ENCODE measurements at regions of chr14 and their contacts with region 1.

Region 1: DNA sequence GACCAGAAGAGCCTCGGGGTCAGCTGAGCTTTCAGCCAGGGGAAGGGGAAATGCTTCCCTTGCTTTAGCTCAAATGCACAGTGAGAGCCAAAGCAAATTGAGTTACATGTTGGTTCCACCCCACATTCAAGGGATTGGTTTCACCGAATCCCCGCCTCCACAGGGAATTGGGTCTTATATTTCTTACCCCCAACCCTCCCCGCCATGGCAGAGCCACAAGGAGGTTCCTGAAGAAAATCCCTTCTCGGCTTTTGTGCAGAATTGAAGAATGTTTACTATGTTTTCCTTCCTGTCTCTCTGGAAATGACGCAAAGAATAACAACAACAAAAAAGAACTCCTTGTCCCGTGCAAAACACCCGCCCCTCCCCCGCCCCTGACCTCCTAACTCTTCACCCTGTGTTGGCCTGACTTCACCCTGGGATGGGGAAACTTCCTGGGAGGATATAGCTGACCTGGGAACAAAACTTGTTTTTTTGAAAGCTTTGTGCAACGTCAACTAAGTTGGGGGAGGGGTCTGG is 21.9 kb upstream of the CIPC start:
- DNase-seq: no peak
- H3K4me3 ChIP-seq: peak overlapping the region in 2 of 4 experiments; percentile 7 to 36; a peak in 3 of 8 replicates
- H3K27ac ChIP-seq: peak overlapping the region; percentile 46; the same call in 1 of the 2 replicates
- H3K4me1 ChIP-seq: peaks cover 4 to 12% (median 11%) of the 10 kb centered on the region in 4 experiments; a peak in 5 of 7 replicates
- H3K27me3 ChIP-seq: no peaks in the 10 kb centered on the region; a peak in 1 of 7 replicates
- CTCF ChIP-seq: no peak
- EP300 ChIP-seq: peak in 1 of 2 experiments; percentile 24; a peak in 1 of 3 replicates
- POLR2A ChIP-seq: no peak
- RAD21 ChIP-seq: no peak

Region 2: GRCh38 chr14:76863724-76864407 is 212.3 kb before region 1 on chr14:
- CTCF ChIA-PET with region 1: interaction called, 719 read pairs
- POLR2A ChIA-PET with region 1: no interaction called
- DNase-seq: no peak
- H3K4me3 ChIP-seq: no peak overlapping the region
- H3K27ac ChIP-seq: no peak overlapping the region
- H3K4me1 ChIP-seq: peaks cover 0 to 12% (median 8%) of the 10 kb centered on the region in 4 experiments; a peak in 6 of 7 replicates
- H3K27me3 ChIP-seq: no peaks in the 10 kb centered on the region; a peak in 1 of 7 replicates
- CTCF ChIP-seq: no peak
- EP300 ChIP-seq: no peak
- POLR2A ChIP-seq: no peak
- RAD21 ChIP-seq: no peak

Region 3: DNA sequence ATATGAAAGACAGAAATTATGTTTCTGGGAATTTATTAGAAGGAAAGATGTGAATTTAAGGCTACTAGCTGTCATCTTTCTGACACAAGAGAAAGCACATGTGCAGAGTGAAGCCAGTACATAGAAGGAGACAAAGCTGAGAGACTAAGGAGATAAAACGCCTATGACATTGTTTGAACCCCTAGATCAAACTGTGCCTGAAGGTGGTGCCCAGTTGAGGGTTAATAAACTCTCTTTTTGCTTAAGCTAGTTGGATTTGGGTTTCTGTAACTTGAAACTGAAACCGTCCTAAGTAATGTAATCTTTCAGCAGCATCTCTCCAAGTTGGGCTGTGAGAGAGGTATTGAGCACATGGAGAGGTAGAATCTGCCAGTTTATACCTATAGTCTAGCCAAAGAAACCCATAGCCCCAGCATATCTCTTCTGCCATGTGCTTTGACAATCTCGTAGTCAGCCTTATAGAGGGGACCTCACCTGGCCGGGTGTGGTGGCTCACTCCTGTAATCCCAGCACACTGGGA is 165.7 kb before region 1 on chr14:
- CTCF ChIA-PET with region 1: interaction called, 199 read pairs
- POLR2A ChIA-PET with region 1: interaction called, 4 read pairs
- DNase-seq: no peak
- H3K4me3 ChIP-seq: no peak overlapping the region
- H3K27ac ChIP-seq: no peak overlapping the region
- H3K4me1 ChIP-seq: peaks cover 0 to 3% (median 1%) of the 10 kb centered on the region in 4 experiments; a peak in 2 of 7 replicates
- H3K27me3 ChIP-seq: no peaks in the 10 kb centered on the region
- CTCF ChIP-seq: no peak
- EP300 ChIP-seq: no peak
- POLR2A ChIP-seq: no peak
- RAD21 ChIP-seq: no peak

Region 4: DNA sequence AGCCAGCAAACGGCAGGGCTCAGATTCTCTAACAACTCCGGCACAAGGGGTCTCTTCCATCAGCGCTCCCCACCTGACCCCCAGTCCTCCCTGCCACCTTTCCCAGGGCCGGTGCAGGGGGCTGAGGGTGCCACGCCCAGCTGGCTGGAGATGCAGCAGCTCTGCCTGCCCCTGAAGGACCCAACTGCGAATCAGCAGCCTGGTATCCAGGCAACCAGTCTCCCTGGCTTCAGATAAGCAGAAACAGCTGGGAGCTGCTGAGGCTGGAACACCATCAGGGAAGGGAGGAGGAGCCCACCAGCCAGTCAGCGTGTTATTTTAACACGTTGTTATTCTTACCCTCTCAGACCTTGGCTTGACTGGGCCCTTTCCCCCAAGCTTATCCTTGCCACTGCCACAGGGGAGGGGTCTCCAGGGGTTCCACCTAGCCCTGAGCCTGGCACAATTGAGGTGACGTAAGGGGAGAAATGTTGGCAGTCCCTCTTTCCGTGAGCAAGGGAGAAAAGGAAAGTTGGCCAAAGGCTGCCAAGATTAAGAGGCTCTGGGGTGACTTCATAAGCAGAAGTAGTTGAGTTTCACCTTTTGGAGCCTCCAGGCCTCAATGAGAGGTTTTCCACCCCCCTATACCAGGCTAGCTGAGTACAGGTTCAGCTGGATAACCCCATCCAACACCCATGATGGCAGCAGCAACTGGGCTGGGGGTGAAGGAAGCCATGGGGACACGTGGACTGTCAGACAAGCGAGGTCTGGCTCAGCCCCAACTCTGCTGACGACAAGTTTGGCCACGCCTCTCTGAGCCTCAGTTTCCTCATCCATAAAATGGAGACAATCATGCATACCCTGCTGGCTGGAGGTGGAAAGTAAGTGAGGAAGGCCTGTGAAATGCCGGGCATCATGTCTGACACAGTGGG is 138.7 kb before region 1 on chr14:
- CTCF ChIA-PET with region 1: interaction called, 17 read pairs
- POLR2A ChIA-PET with region 1: no interaction called
- DNase-seq: no peak
- H3K4me3 ChIP-seq: no peak overlapping the region
- H3K27ac ChIP-seq: peak overlapping the region; percentile 10; the same call in 1 of the 2 replicates
- H3K4me1 ChIP-seq: peaks cover 0 to 29% (median 16%) of the 10 kb centered on the region in 4 experiments; a peak in 6 of 7 replicates
- H3K27me3 ChIP-seq: no peaks in the 10 kb centered on the region
- CTCF ChIP-seq: no peak
- EP300 ChIP-seq: no peak
- POLR2A ChIP-seq: no peak
- RAD21 ChIP-seq: no peak

Region 5: GRCh38 chr14:77086017-77086736 is 10.0 kb after region 1 on chr14:
- CTCF ChIA-PET with region 1: interaction called, 603 read pairs
- POLR2A ChIA-PET with region 1: interaction called, 45 read pairs
- DNase-seq: no peak
- H3K4me3 ChIP-seq: no peak overlapping the region
- H3K27ac ChIP-seq: peak overlapping the region; percentile 54
- H3K4me1 ChIP-seq: peaks cover 10 to 30% (median 19%) of the 10 kb centered on the region in 4 experiments
- H3K27me3 ChIP-seq: no peaks in the 10 kb centered on the region
- CTCF ChIP-seq: no peak
- EP300 ChIP-seq: peak in 1 of 2 experiments; percentile 90; a peak in 2 of 3 replicates
- POLR2A ChIP-seq: no peak; a peak in 1 of 3 replicates
- RAD21 ChIP-seq: no peak

Region 6: DNA sequence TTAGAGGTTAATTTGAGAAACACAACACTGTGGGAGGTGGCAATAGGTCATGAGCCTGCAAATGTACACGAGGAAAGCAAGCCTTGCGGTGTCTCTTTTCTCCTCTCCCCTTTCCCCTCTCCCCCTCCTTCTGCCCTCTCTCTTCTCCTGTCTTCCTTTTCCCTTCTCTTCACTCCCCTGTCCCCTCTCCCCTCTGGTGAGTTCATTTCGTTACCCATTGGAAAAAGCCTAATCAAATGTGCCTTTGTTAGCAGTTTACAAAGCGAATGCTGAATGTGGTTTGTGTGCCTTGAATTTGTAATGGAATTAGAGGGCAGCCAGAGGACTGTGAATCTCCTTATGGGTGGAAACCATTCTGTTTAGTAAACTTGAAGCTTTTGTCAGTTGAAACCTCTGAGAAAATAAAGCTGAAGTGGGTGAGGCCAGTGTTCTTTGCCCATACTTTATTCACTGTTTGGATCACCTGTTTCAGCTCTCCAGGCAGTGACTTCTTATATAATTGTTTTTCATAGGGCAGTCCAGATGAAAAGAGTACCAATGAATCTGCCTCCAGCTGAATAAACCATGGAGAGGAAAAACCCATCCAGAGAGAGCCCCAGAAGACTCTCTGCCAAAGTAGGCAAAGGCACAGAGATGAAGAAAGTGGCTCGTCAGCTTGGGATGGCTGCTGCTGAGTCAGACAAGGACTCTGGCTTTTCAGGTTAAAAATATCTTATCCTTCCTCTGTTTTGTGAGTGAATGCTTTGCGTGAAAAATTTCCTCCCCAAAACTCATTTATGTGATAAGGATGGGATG is 29.2 kb after region 1 on chr14:
- CTCF ChIA-PET with region 1: interaction called, 1,490 read pairs
- POLR2A ChIA-PET with region 1: interaction called, 4 read pairs
- DNase-seq: no peak
- H3K4me3 ChIP-seq: peak overlapping the region in 1 of 4 experiments; percentile 44; a peak in 2 of 8 replicates
- H3K27ac ChIP-seq: peak overlapping the region; percentile 58; the same call in 1 of the 2 replicates
- H3K4me1 ChIP-seq: peaks cover 2 to 25% (median 15%) of the 10 kb centered on the region in 4 experiments
- H3K27me3 ChIP-seq: no peaks in the 10 kb centered on the region
- CTCF ChIP-seq: no peak
- EP300 ChIP-seq: no peak
- POLR2A ChIP-seq: no peak
- RAD21 ChIP-seq: no peak

Region 7: GRCh38 chr14:77177702-77178101 is 101.5 kb after region 1 on chr14:
- CTCF ChIA-PET with region 1: no interaction called
- POLR2A ChIA-PET with region 1: no interaction called
- DNase-seq: no peak
- H3K4me3 ChIP-seq: no peak overlapping the region
- H3K27ac ChIP-seq: no peak overlapping the region
- H3K4me1 ChIP-seq: peaks cover 3 to 11% (median 7%) of the 10 kb centered on the region in 4 experiments; a peak in 6 of 7 replicates
- H3K27me3 ChIP-seq: no peaks in the 10 kb centered on the region
- CTCF ChIP-seq: no peak
- EP300 ChIP-seq: no peak
- POLR2A ChIP-seq: no peak
- RAD21 ChIP-seq: no peak

Region 8: GRCh38 chr14:77203611-77204477 is 127.7 kb after region 1 on chr14:
- CTCF ChIA-PET with region 1: no interaction called
- POLR2A ChIA-PET with region 1: no interaction called
- DNase-seq: no peak
- H3K4me3 ChIP-seq: no peak overlapping the region
- H3K27ac ChIP-seq: no peak overlapping the region
- H3K4me1 ChIP-seq: peaks cover 0 to 11% (median 8%) of the 10 kb centered on the region in 4 experiments; a peak in 5 of 7 replicates
- H3K27me3 ChIP-seq: no peaks in the 10 kb centered on the region
- CTCF ChIP-seq: no peak
- EP300 ChIP-seq: no peak
- POLR2A ChIP-seq: no peak
- RAD21 ChIP-seq: no peak

Region 9: GRCh38 chr14:77314043-77314442 is 237.9 kb after region 1 on chr14:
- CTCF ChIA-PET with region 1: no interaction called
- POLR2A ChIA-PET with region 1: no interaction called
- DNase-seq: no peak
- H3K4me3 ChIP-seq: no peak overlapping the region
- H3K27ac ChIP-seq: peak overlapping the region; percentile 73; the same call in 1 of the 2 replicates
- H3K4me1 ChIP-seq: peaks cover 11 to 25% (median 14%) of the 10 kb centered on the region in 4 experiments; a peak in 6 of 7 replicates
- H3K27me3 ChIP-seq: no peaks in the 10 kb centered on the region
- CTCF ChIP-seq: no peak
- EP300 ChIP-seq: peak in 1 of 2 experiments; percentile 50; a peak in 1 of 3 replicates
- POLR2A ChIP-seq: no peak
- RAD21 ChIP-seq: peak in 1 of 2 experiments; percentile 16; a peak in 2 of 4 replicates